PC-3 (cell line): ENCODE measurements at regions of chr10 and their contacts with region 1.

Region 1: DNA sequence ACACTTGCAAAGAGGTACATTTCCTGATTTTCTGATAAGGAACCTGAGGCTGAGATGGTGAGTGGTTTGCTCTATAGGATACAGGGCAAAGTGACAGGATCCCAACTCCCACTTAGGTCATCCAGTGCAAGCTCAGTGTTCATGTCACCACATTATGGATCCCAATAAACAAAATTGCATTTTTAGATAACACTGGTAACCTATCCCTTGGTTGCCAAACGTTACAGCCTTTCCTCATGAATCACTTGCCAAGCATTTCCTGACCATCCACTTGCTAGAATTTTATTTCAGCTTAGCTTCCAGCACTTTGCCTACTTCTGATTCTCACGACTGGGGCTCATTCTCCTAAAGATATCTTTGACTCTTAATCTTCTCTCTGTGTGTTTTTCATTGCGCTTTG is 131.4 kb upstream of the ODAD2 start:
- DNase-seq: peak; percentile 68
- ATAC-seq: peak; percentile 78
- H3K4me3 ChIP-seq: no peak overlapping the region
- H3K27ac ChIP-seq: peak overlapping the region; percentile 66
- H3K4me1 ChIP-seq: peaks cover 24% of the 10 kb centered on the region
- H3K27me3 ChIP-seq: no peaks in the 10 kb centered on the region
- CTCF ChIP-seq: no peak

Region 2: GRCh38 chr10:27948186-27948585 is 182.1 kb before region 1 on chr10:
- CTCF ChIA-PET with region 1: no interaction called
- POLR2A ChIA-PET with region 1: no interaction called
- intact Hi-C with region 1: no loop called
- DNase-seq: no peak
- ATAC-seq: no peak
- H3K4me3 ChIP-seq: no peak overlapping the region
- H3K27ac ChIP-seq: no peak overlapping the region
- H3K4me1 ChIP-seq: no peaks in the 10 kb centered on the region
- H3K27me3 ChIP-seq: no peaks in the 10 kb centered on the region
- CTCF ChIP-seq: no peak

Region 3: DNA sequence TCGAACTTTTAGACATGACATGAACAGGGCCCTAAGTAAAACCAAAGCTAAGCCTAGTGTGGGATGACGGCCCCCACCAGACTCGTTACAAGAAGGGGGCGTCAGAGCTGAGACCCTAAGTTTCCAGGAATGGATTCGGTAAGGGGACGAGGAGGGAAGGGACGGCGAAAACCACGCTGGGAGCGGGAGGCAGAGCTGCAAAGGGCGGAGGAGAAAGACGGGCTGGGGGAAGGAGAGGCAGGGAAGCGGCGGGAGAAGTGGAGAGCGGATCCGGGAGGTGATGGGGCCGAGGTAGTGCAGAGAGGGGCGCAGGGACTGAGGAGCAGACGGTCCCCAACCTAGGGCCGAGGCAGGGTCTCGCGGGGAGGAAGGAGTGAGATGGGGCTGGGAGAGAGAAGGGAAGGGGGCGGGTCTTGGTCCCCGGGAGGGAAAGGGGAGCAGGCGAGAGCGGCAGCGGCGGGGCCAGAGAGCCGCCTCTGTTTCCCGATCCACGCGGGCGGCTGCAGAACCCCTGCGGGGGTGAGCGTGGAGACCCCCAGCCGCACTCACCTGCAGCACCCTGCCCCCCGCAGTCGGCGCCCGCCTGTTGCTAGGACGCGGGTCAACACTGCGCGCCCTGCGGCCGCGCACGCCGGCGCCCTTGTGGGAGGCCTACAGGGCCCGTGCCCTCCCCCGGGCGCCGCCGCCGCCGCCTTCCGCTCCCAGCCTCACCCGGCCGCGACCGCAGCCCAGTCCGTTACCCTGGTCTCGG is 131.8 kb before region 1 on chr10:
- CTCF ChIA-PET with region 1: no interaction called
- POLR2A ChIA-PET with region 1: no interaction called
- intact Hi-C with region 1: loop called (anchors 5 kb)
- DNase-seq: peak; percentile 27
- ATAC-seq: peak; percentile 84
- H3K4me3 ChIP-seq: peak overlapping the region; percentile 90
- H3K27ac ChIP-seq: peak overlapping the region; percentile 18; the same call in 1 of the 2 replicates
- H3K4me1 ChIP-seq: peaks cover 7% of the 10 kb centered on the region; the same call in 1 of the 2 replicates
- H3K27me3 ChIP-seq: no peaks in the 10 kb centered on the region
- CTCF ChIP-seq: no peak